ENCODE measurements at regions of chr10 and their contacts with region 1.

Region 1: DNA sequence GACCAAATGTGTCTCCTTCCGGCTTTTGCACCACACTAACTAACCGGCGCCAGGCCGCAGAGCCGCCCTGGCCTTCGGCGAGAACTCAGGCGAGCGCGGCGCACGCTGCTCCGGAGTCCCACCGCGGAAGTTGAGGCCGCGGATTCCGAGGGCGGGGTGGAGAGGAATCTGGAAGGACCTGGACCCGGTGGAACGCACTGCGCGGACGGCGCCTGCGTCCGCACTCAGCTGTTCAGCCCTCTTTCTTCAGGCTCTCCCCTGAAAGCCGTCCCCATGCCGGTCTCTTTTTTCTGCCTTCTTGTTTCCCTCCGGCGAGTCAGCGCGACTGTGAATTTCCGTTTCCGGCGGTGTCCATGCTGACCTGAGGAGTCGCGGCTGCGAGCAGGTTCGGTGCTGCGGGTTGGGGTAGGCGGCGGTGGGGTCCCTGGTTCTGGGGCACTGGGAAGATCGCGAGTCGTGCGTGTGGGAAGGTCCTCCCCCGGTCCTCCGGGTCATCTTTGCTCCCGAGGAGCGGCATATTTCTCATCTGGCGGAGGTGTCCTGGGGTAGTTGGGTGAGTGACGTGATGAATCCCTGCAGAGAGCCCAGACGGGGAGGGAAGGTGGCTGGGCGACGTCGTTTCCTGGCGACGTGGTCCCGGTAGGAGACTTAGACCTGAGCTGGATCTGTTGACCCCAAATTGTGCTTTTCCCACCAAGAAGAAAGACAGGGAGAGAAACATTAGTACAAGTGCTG is at the start of gene BMS1:
- DNase-seq: peak; percentile 80 to 94 (median 92)
- H3K4me3 ChIP-seq: peak within 1 kb of the TSS; percentile 58 to 96 (median 81)
- H3K27ac ChIP-seq: peak within 1 kb of the TSS; percentile 81 to 99 (median 95)
- H3K27me3 ChIP-seq: peaks cover 0 to 2% (median 0%) of the 10 kb centered on the region in 45 donors
- CTCF ChIP-seq: peak in 28 of 56 donors; percentile 10 to 48 (median 25)
- total RNA-seq, gene BMS1: 9.9 to 20.8 (median 15.8) TPM

Region 2: DNA sequence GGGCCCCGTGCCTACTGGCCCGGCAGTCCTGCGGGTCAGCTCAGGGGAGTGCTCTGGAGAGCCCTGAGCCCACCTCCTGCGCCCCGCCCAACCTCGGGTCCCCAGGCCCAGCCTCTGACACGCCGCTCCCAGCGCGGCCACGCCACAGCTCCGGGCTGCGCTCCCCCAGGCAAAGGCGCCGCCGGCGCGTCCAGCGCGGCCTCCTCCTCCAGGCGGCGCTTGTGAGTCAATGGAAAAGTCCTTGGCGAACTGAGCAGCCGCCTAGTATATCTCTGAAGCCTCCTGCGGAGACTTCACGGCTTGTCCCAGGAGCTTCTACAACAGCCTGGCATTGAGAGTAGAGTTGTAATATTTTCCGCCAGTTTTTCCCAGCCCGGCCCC is 29.5 kb before region 1 on chr10:
- intact Hi-C with region 1: no loop called
- DNase-seq: peak in 9 of 10 donors; percentile 15 to 77 (median 47)
- H3K4me3 ChIP-seq: peak overlapping the region; percentile 23 to 76 (median 52)
- H3K27ac ChIP-seq: no peak overlapping the region
- H3K27me3 ChIP-seq: peaks cover 3 to 98% (median 61%) of the 10 kb centered on the region in 45 donors
- CTCF ChIP-seq: peak; percentile 41 to 87 (median 76)

Region 3: DNA sequence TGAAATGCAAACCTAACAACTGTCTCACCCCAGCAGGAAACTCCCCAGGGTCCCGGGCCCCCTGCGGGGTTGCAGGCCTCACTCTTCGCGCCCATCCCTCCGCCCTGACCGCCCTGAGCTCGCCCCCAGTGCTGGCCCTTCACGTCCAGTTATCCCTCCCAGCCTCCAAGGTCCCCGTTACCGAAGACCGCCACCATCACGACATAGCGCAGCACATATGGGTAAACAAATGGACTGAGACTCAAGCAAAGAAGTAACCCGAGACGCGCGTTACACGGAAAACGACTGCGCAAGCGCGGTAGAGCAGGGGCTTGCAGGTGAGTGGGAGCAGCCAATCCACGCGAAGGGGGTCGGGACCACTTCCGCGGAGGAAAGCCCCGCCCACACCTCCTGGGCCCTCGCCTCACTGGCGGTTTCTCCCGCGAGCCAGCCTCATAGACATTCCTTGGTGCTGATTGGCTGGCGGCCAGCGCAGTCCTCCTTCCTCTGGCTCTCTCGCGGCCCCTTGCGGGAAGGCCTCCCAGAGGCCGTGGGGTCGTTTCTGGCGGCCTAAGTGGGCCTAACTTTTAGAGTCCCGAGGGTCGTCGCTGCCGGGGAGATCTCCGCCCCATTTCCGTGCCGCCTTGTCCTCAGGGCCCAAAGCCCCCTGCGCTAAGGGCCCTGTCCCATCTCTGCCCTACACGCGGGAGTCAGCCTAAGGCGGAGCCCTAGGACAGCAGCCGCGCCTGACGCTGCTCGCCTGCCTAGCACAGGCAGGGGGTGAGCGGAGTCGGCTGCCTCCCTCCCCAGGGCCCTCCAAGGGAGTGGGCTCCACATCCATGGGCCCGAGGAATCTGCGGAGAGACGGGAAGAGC is 579.6 kb after region 1 on chr10:
- intact Hi-C with region 1: loop called in 1 of 2 experiments (anchors 10 kb)
- DNase-seq: peak; percentile 91 to 98 (median 95)
- H3K4me3 ChIP-seq: peak overlapping the region; percentile 42 to 76 (median 64)
- H3K27ac ChIP-seq: peak overlapping the region; percentile 10 to 98 (median 90)
- H3K27me3 ChIP-seq: no peaks in the 10 kb centered on the region
- CTCF ChIP-seq: peak in 55 of 56 donors; percentile 35 to 80 (median 62)